AG04449 (cell line): ENCODE measurements at regions of chr1 and their contacts with region 1.

Region 1: DNA sequence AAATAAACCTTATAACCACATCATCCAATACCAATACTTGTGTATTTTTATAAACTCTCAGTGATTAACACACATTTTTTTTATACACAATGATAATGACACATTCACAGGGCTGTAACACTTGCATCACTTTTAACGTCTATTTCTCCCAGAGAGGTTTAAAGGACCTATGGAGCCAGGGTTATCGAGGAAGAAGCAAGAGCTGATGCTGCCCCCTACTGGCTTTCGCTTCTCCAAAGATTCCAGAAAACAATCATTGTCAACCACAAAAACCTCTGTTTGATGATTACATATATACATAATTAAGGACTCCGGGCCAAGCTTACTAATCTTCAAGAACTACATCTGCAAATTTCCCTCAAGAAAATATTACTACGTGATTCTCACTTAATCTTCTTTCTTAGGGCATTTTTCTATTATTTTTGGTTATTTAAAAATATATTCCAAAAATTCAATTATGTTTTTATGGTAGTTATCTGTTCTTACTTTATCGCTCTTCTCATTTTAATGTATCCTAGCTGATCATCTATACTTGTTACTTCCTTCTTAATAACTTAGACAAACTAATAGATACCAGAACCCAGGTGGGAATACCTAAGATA is 214.5 kb downstream of the VAV3 start:
- DNase-seq: peak; percentile 38
- H3K4me3 ChIP-seq: no peak overlapping the region
- CTCF ChIP-seq: peak; percentile 65

Region 2: DNA sequence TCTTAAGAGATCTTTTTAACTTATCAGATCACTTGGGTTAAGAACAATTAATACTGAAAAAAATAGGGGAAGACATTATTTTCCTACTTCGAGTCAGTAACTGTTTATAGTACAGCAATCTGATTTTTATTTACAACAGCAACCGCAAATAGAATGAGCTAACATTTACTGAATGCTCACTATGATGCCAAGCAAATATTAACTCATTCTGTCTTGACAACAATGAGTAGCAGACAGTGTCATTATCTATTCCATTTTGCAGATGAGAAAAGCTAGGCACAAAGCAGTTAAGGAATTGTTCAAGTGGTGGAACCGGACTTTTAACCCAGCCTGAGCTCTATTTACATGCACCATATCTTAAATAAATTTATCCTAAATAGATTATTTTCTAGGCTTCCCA is 335.9 kb before region 1 on chr1:
- CTCF ChIA-PET with region 1: interaction called, 12 read pairs
- POLR2A ChIA-PET with region 1: no interaction called
- DNase-seq: no peak
- H3K4me3 ChIP-seq: no peak overlapping the region
- CTCF ChIP-seq: no peak

Region 3: DNA sequence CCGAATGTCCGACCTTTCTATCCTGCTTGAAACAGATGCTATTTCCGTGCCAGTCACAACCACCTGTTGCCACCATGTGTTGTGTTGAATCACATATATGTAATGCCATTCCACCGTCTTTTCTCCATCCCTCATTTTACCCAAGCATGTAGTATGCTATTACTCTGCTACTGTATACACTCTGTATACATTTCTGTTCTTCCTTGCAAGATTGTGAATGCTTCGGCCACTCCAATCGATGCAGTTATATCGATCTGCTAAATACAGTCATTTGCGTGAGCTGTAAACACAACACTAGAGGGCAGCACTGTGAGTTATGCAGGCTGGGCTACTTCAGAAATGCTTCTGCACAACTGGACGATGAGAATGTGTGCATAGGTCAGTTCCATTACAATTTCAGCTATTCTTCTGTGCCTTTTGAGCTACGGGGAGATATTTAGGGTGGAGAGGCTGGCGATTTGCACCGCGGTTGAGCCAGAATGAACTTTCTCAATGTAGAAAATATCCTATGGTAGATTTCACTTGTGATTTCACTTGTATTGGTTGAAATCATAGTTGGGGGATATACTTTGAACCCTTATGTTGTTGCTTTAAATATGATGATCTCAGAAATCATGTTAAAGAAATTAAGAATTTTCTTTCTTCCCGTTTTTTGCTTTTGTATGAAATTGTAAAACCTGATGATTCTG is 319.8 kb before region 1 on chr1:
- CTCF ChIA-PET with region 1: interaction called, 47 read pairs
- POLR2A ChIA-PET with region 1: no interaction called
- DNase-seq: no peak
- H3K4me3 ChIP-seq: no peak overlapping the region
- CTCF ChIP-seq: peak; percentile 46

Region 4: GRCh38 chr1:107620753-107621152 is 129.7 kb before region 1 on chr1:
- CTCF ChIA-PET with region 1: no interaction called
- POLR2A ChIA-PET with region 1: no interaction called
- DNase-seq: no peak
- H3K4me3 ChIP-seq: no peak overlapping the region
- CTCF ChIP-seq: no peak